GM12878 (cell line): ENCODE measurements at regions of chr16 and their contacts with region 1.

Region 1: DNA sequence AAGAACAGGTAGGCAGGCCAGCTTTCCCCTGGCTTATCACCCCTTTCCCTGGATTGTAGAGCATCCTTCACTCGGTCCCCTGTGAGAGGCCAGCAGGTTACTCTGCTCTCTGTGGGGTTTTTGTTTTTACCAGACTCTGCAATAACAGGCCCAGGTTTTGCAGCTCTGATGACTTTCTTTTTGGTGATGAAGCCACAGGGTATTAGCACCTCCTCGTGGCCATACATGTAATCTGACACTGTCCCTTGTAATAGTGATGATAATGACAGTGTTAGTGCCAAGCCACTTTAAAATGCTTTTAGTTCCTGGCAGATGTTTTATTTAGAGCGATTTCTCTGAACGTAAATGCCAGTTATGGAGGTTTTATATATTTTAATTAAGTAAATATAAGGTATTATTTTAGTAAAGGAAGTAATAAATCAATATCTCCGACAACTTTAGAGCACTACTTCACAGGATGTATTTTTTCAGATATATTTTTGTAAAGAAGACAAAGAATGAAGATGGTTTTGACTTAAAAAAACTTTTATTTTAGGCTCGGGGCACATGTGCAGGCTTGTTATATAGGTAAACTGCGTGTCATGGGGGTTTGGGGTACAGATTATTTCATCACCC is 38.0 kb upstream of the CPHXL start:
- DNase-seq: peak; percentile 53
- ATAC-seq: peak; percentile 90
- H3K4me3 ChIP-seq: no peak overlapping the region
- H3K27ac ChIP-seq: no peak overlapping the region
- H3K4me1 ChIP-seq: peaks cover 5% of the 10 kb centered on the region
- H3K27me3 ChIP-seq: no peaks in the 10 kb centered on the region; a peak in 1 of 4 replicates
- CTCF ChIP-seq: peak; percentile 80 to 91 (median 91)
- EP300 ChIP-seq: no peak
- POLR2A ChIP-seq: no peak
- RAD21 ChIP-seq: peak; percentile 98

Region 2: DNA sequence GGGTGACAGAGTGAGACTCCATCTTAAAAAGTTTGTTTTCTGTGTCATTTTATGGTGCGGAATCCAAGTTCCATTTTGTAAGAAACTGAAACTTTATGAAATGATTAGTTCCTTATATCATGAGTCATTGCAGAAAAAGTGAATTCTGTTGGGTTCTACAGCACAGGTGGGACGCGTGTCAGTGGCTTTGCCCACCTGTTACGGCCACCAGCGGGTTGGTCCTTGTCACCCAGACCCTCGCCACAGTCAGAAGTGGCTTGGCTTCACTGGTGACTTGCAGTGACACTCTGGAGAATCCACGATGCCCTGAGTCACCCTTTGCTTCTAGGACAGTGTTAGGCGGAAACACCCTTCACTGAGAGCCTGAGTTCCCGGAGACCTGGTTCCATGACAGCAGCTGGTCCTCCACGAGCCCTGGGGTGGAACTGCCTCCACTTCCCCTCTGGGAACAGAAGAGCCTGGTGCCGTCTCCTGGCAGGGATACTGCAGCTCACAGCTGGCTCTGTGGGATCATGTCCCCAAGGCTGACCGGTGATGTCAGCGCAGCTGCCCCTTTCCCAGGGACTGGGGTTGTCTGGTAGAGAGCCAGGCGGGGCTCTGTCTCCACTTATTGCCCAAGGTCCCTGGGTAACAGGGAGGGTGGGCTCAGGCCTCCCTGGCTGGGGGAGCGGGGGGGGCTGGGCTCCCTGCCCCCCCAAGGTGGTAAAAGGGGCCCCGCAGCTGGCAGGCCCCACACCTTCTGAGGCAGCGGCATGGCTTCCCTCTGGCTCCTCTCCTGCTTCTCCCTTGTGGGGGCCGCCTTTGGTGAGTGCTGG is 545.8 kb before region 1 on chr16 and contains the start of gene CTRB1:
- CTCF ChIA-PET with region 1: no interaction called
- POLR2A ChIA-PET with region 1: no interaction called
- RAD21 ChIA-PET with region 1: no interaction called
- SMC1A ChIA-PET with region 1: no interaction called
- in situ Hi-C with region 1: loop called (anchors 10 kb)
- intact Hi-C with region 1: no loop called
- DNase-seq: no peak
- ATAC-seq: peak; percentile 79
- H3K4me3 ChIP-seq: no peak within 1 kb of the TSS
- H3K27ac ChIP-seq: peak within 1 kb of the TSS; percentile 20; the same call in 1 of the 2 replicates
- H3K4me1 ChIP-seq: peaks cover 20% of the 10 kb centered on the region
- H3K27me3 ChIP-seq: no peaks in the 10 kb centered on the region
- CTCF ChIP-seq: no peak
- EP300 ChIP-seq: no peak; a peak in 1 of 4 replicates
- POLR2A ChIP-seq: peak; percentile 52; the same call in 1 of the 2 replicates
- RAD21 ChIP-seq: no peak
- polyA plus RNA-seq, gene CTRB1: not detected

Region 3: GRCh38 chr16:75402821-75403475 is 361.3 kb before region 1 on chr16:
- CTCF ChIA-PET with region 1: no interaction called
- POLR2A ChIA-PET with region 1: no interaction called
- RAD21 ChIA-PET with region 1: no interaction called
- SMC1A ChIA-PET with region 1: no interaction called
- in situ Hi-C with region 1: no loop called
- intact Hi-C with region 1: loop called (anchors 2 kb)
- DNase-seq: no peak
- ATAC-seq: peak; percentile 59; the same call in 2 of the 3 replicates
- H3K4me3 ChIP-seq: no peak overlapping the region
- H3K27ac ChIP-seq: no peak overlapping the region
- H3K4me1 ChIP-seq: no peaks in the 10 kb centered on the region
- H3K27me3 ChIP-seq: no peaks in the 10 kb centered on the region
- CTCF ChIP-seq: peak; percentile 45 to 60 (median 55); a peak in 5 of 6 replicates
- EP300 ChIP-seq: no peak
- POLR2A ChIP-seq: no peak
- RAD21 ChIP-seq: peak; percentile 59

Region 4: GRCh38 chr16:75478074-75478473 is 286.2 kb before region 1 on chr16:
- CTCF ChIA-PET with region 1: interaction called, 23 read pairs
- POLR2A ChIA-PET with region 1: no interaction called
- RAD21 ChIA-PET with region 1: interaction called, 17 read pairs
- SMC1A ChIA-PET with region 1: interaction called, 20 read pairs
- in situ Hi-C with region 1: loop called (anchors 5 kb)
- intact Hi-C with region 1: no loop called
- DNase-seq: no peak
- ATAC-seq: peak; percentile 54
- H3K4me3 ChIP-seq: no peak overlapping the region
- H3K27ac ChIP-seq: no peak overlapping the region
- H3K4me1 ChIP-seq: no peaks in the 10 kb centered on the region
- H3K27me3 ChIP-seq: no peaks in the 10 kb centered on the region; a peak in 1 of 4 replicates
- CTCF ChIP-seq: no peak
- EP300 ChIP-seq: no peak
- POLR2A ChIP-seq: no peak
- RAD21 ChIP-seq: no peak

Region 5: GRCh38 chr16:75555707-75556430 is 208.4 kb before region 1 on chr16 and contains the start of gene TMEM231:
- CTCF ChIA-PET with region 1: interaction called, 6 read pairs
- POLR2A ChIA-PET with region 1: interaction called, 3 read pairs
- RAD21 ChIA-PET with region 1: no interaction called
- SMC1A ChIA-PET with region 1: no interaction called
- in situ Hi-C with region 1: no loop called
- intact Hi-C with region 1: loop called (anchors 5 kb)
- DNase-seq: no peak
- ATAC-seq: peak; percentile 96
- H3K4me3 ChIP-seq: peak within 1 kb of the TSS; percentile 81
- H3K27ac ChIP-seq: peak within 1 kb of the TSS; percentile 65
- H3K4me1 ChIP-seq: peaks cover 4% of the 10 kb centered on the region; the same call in 1 of the 2 replicates
- H3K27me3 ChIP-seq: no peaks in the 10 kb centered on the region
- CTCF ChIP-seq: no peak
- EP300 ChIP-seq: 0 out of 4 replicates have a peak, but pooled peaks of 1 of the 2 experiments have one; percentile 21
- POLR2A ChIP-seq: peak; percentile 72
- RAD21 ChIP-seq: no peak
- polyA plus RNA-seq, gene TMEM231: 1.2 TPM

Region 6: DNA sequence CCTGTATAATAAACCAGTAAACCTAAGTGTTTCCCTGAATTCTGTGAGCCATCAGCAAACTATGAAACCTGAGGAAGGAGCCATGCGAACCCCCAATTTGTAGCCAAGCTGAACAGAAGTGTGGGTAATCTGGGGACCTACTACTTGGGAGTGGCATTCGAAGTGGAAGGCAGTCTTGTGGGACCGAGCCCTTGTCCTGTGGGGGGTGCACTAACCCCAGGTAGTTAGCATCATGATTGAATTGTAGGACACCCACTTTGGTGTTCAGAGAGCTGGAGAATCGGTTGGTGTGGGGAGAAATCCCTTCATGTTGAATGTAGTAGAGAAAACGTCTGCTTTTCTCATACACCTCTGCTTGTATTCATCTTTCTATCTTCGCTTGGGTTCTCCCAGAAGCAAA is 41.7 kb after region 1 on chr16:
- CTCF ChIA-PET with region 1: no interaction called
- POLR2A ChIA-PET with region 1: no interaction called
- RAD21 ChIA-PET with region 1: no interaction called
- SMC1A ChIA-PET with region 1: no interaction called
- in situ Hi-C with region 1: no loop called
- intact Hi-C with region 1: no loop called
- DNase-seq: no peak
- ATAC-seq: no peak
- H3K4me3 ChIP-seq: no peak overlapping the region
- H3K27ac ChIP-seq: no peak overlapping the region
- H3K4me1 ChIP-seq: no peaks in the 10 kb centered on the region
- H3K27me3 ChIP-seq: no peaks in the 10 kb centered on the region
- CTCF ChIP-seq: no peak
- EP300 ChIP-seq: no peak
- POLR2A ChIP-seq: no peak
- RAD21 ChIP-seq: no peak